Brain microvascular endothelial cell (primary cell): ENCODE measurements at regions of chr4 and their contacts with region 1.

Region 1: GRCh38 chr4:78864405-78865024 is 74.7 kb downstream of the PAQR3 start:
- DNase-seq: peak; percentile 71
- H3K4me3 ChIP-seq: no peak overlapping the region
- H3K27ac ChIP-seq: no peak overlapping the region
- H3K27me3 ChIP-seq: no peaks in the 10 kb centered on the region
- CTCF ChIP-seq: peak; percentile 48

Region 2: DNA sequence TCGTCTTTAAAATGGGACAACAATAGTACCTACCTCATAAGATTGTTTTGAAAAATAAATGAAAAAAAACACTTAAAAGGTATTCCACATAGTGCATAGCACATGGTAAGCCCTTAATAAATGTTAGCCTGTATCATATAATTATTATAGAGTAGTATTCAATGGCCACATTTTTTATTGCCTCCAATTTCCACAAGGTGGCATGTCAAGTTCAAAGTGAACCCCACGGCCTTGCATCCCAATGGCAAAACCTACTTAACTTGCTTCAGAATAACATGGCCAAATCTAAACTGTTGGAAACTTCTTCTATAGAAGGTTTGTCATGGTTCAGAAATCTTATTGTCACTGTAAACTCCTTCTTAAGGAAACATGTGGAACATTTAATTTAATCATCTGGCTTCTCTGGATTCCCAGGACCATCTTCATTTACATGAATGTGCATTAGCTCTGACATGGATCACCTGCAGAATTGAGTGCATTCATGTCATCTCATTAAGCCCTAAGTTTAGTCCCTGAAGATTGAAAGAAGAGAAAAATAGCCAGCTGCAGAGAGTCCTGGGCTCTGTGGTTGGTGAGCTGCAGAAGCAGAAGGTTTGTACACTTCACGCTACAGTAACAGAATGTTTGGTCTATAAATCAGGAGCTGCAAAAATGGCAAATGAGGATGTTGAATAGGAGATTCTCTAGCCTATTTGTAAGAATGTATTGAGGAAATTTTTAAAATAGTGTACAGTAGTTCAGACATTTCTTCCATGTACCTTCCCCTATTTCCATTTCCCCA is 251.9 kb before region 1 on chr4:
- in situ Hi-C with region 1: loop called (anchors 25 kb)
- DNase-seq: peak; percentile 46
- H3K4me3 ChIP-seq: no peak overlapping the region
- H3K27ac ChIP-seq: no peak overlapping the region
- H3K27me3 ChIP-seq: no peaks in the 10 kb centered on the region
- CTCF ChIP-seq: peak; percentile 65

Region 3: GRCh38 chr4:79232540-79232939 is 368.0 kb after region 1 on chr4:
- in situ Hi-C with region 1: no loop called
- DNase-seq: peak; percentile 14
- H3K4me3 ChIP-seq: no peak overlapping the region
- H3K27ac ChIP-seq: no peak overlapping the region
- H3K27me3 ChIP-seq: no peaks in the 10 kb centered on the region
- CTCF ChIP-seq: no peak